PC-3 (cell line): ENCODE measurements at regions of chr4 and their contacts with region 1.

Region 1: GRCh38 chr4:129362674-129363274 is 266.8 kb downstream of the C4orf33 start:
- DNase-seq: peak; percentile 61
- ATAC-seq: peak; percentile 48
- H3K4me3 ChIP-seq: no peak overlapping the region
- H3K27ac ChIP-seq: no peak overlapping the region
- H3K4me1 ChIP-seq: peaks cover 12% of the 10 kb centered on the region
- H3K27me3 ChIP-seq: no peaks in the 10 kb centered on the region
- CTCF ChIP-seq: peak; percentile 84

Region 2: GRCh38 chr4:128924951-128925350 is 437.8 kb before region 1 on chr4:
- CTCF ChIA-PET with region 1: no interaction called
- POLR2A ChIA-PET with region 1: no interaction called
- intact Hi-C with region 1: no loop called
- DNase-seq: no peak
- ATAC-seq: no peak
- H3K4me3 ChIP-seq: no peak overlapping the region
- H3K27ac ChIP-seq: no peak overlapping the region
- H3K4me1 ChIP-seq: no peaks in the 10 kb centered on the region
- H3K27me3 ChIP-seq: no peaks in the 10 kb centered on the region
- CTCF ChIP-seq: no peak

Region 3: GRCh38 chr4:129218360-129218759 is 144.4 kb before region 1 on chr4:
- CTCF ChIA-PET with region 1: no interaction called
- POLR2A ChIA-PET with region 1: no interaction called
- intact Hi-C with region 1: loop called (anchors 5 kb)
- DNase-seq: peak; percentile 53
- ATAC-seq: peak; percentile 97
- H3K4me3 ChIP-seq: no peak overlapping the region
- H3K27ac ChIP-seq: no peak overlapping the region
- H3K4me1 ChIP-seq: peaks cover 7% of the 10 kb centered on the region; the same call in 1 of the 2 replicates
- H3K27me3 ChIP-seq: no peaks in the 10 kb centered on the region
- CTCF ChIP-seq: peak; percentile 63

Region 4: DNA sequence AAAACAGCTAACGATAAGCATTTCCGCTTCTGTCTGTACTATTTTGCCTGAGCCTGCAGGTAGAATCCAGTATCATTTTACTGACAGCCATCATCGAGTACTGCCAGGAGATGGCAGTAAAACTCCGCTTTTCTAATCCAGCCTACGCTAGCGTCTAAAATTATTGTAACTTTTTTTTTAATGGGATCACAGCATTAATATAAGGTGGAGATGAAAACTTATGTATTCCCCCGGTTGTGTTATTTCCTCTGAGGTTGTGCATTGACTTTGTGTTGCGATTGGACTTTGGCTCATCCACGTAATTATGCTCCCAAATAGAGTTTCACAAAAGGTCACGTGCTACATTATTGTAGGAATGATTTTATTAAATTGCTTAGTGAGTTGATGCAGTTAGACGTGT is 18.7 kb before region 1 on chr4:
- CTCF ChIA-PET with region 1: no interaction called
- POLR2A ChIA-PET with region 1: no interaction called
- intact Hi-C with region 1: loop called (anchors 1 kb)
- DNase-seq: peak; percentile 71
- ATAC-seq: peak; percentile 80
- H3K4me3 ChIP-seq: peak overlapping the region; percentile 32; the same call in 1 of the 2 replicates
- H3K27ac ChIP-seq: no peak overlapping the region
- H3K4me1 ChIP-seq: peaks cover 21% of the 10 kb centered on the region
- H3K27me3 ChIP-seq: no peaks in the 10 kb centered on the region
- CTCF ChIP-seq: peak; percentile 76

Region 5: DNA sequence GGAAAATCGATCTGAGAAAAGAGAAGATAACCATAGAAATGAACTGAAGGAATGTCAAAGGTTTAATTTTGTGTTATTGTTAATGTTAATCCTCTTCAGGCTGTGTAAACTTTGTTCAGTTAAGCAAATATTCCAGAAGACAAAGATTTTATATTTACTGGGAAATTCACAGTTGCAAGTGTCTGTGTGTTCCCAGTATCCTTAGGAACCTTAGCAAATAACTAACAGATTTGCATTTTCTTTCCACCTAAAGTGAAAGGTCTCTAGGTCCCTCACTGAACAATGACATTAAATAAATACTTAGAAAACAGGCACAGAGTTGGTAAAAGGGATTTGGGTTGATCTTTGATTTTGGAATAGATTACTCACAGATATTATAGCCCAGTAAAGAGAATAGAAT is 57.9 kb after region 1 on chr4:
- CTCF ChIA-PET with region 1: no interaction called
- POLR2A ChIA-PET with region 1: no interaction called
- intact Hi-C with region 1: no loop called
- DNase-seq: no peak
- ATAC-seq: no peak
- H3K4me3 ChIP-seq: no peak overlapping the region
- H3K27ac ChIP-seq: no peak overlapping the region
- H3K4me1 ChIP-seq: no peaks in the 10 kb centered on the region
- H3K27me3 ChIP-seq: no peaks in the 10 kb centered on the region
- CTCF ChIP-seq: no peak

Region 6: DNA sequence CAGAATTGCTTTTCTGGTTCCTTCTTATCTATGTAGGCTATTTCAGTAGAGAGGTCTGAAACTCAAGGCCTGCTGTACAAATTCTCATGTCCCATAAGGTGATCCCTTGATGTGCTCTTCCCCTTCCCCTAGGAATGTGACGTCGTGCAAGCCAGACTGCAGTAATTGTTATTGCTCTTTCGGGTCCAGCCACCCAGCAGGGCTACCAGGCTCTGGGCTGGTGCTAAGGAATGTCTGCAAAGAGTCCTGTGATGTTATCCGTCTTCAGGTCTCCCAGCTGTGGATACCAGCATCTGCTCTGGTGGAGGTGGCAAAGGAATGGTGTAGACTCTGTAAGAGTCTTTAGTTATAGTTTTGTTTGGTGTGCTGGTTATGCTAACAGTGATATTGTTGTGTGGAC is 111.9 kb after region 1 on chr4:
- CTCF ChIA-PET with region 1: no interaction called
- POLR2A ChIA-PET with region 1: no interaction called
- intact Hi-C with region 1: no loop called
- DNase-seq: no peak
- ATAC-seq: no peak
- H3K4me3 ChIP-seq: no peak overlapping the region
- H3K27ac ChIP-seq: no peak overlapping the region
- H3K4me1 ChIP-seq: no peaks in the 10 kb centered on the region
- H3K27me3 ChIP-seq: no peaks in the 10 kb centered on the region
- CTCF ChIP-seq: no peak

Region 7: DNA sequence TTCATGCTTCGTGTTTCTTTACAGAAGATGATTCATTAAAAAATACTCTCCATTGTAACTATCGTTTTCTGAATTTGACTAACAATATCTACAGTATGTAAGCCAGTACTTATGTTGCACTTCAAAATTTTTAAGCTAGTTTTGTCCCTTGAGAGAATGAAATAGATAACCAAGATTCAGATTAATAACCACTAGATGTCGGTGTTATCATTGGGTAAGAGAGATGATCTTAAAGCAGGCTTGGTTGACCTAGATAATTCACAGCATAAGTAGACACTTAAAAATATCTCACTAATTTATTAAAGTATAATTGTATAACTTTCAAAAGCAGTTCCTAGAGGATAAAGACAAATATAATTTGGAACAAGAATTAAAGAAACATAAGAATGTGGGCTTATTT is 164.0 kb after region 1 on chr4:
- CTCF ChIA-PET with region 1: interaction called, 3 read pairs
- POLR2A ChIA-PET with region 1: no interaction called
- intact Hi-C with region 1: loop called (anchors 5 kb)
- DNase-seq: peak; percentile 37
- ATAC-seq: peak; percentile 40; the same call in 1 of the 2 replicates
- H3K4me3 ChIP-seq: no peak overlapping the region
- H3K27ac ChIP-seq: no peak overlapping the region
- H3K4me1 ChIP-seq: no peaks in the 10 kb centered on the region
- H3K27me3 ChIP-seq: peaks cover 5% of the 10 kb centered on the region; the same call in 1 of the 2 replicates
- CTCF ChIP-seq: peak; percentile 50

Region 8: DNA sequence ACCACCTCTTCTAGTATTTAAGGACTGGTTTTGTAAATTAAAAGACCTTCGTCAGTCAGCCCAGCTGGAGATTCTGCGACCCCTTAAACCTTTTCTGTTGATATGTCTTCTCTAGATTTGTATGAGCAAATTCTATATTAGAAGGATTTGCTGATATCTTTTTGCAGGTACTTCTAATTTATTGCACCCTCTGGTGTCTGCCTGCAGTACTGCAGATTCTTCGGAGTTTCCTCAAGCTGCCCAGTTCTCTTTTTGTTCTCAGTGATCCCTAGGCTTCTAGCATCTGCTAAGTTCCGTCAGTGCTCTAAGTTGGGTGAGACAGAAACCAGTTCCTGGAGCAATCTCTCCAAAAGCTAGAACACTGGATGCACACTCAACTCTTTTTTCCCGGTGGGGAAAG is 278.4 kb after region 1 on chr4:
- CTCF ChIA-PET with region 1: interaction called, 11 read pairs
- POLR2A ChIA-PET with region 1: no interaction called
- intact Hi-C with region 1: loop called (anchors 1 kb)
- DNase-seq: peak; percentile 67
- ATAC-seq: peak; percentile 31; the same call in 1 of the 2 replicates
- H3K4me3 ChIP-seq: no peak overlapping the region
- H3K27ac ChIP-seq: no peak overlapping the region
- H3K4me1 ChIP-seq: no peaks in the 10 kb centered on the region
- H3K27me3 ChIP-seq: no peaks in the 10 kb centered on the region
- CTCF ChIP-seq: peak; percentile 75

Region 9: DNA sequence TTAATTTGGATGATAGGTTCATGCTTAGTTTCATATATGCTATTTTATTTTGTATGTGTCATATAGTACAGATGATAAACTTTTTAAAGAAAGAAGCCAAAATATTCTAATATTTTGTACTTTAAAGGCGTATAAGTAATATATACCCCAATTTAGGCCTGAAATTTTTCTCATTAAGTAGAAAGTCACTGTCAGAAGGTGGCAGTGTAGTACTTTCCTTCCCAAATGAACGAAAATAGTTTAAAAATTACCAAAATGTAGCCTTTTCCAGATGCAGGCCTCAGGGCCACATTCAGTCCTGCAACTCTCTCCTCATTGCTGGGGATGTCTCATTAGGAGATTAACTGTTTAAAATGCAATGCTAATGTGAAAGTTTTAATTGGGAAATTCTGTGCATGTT is 996.8 kb after region 1 on chr4:
- CTCF ChIA-PET with region 1: no interaction called
- POLR2A ChIA-PET with region 1: no interaction called
- intact Hi-C with region 1: loop called (anchors 10 kb)
- DNase-seq: peak; percentile 35
- ATAC-seq: no peak; the same call in 1 of the 2 replicates
- H3K4me3 ChIP-seq: no peak overlapping the region
- H3K27ac ChIP-seq: no peak overlapping the region
- H3K4me1 ChIP-seq: no peaks in the 10 kb centered on the region
- H3K27me3 ChIP-seq: no peaks in the 10 kb centered on the region
- CTCF ChIP-seq: peak; percentile 61

Region 10: GRCh38 chr4:130395871-130396270 is 1033.1 kb after region 1 on chr4:
- CTCF ChIA-PET with region 1: no interaction called
- POLR2A ChIA-PET with region 1: no interaction called
- intact Hi-C with region 1: loop called (anchors 5 kb)
- DNase-seq: peak; percentile 73
- ATAC-seq: peak; percentile 94
- H3K4me3 ChIP-seq: no peak overlapping the region
- H3K27ac ChIP-seq: peak overlapping the region; percentile 71
- H3K4me1 ChIP-seq: peaks cover 14% of the 10 kb centered on the region
- H3K27me3 ChIP-seq: no peaks in the 10 kb centered on the region
- CTCF ChIP-seq: no peak